HCT116 (cell line): ENCODE measurements at regions of chr11 and their contacts with region 1.

Region 1: GRCh38 chr11:33700425-33701271 is at the start of gene C11orf91:
- DNase-seq: peak; percentile 76
- ATAC-seq: peak; percentile 93
- H3K4me3 ChIP-seq: peak within 1 kb of the TSS; percentile 44 to 52
- H3K27ac ChIP-seq: peak within 1 kb of the TSS; percentile 23; the same call in 1 of the 2 replicates
- H3K4me1 ChIP-seq: peaks cover 10 to 71% of the 10 kb centered on the region in 2 experiments
- H3K27me3 ChIP-seq: no peaks in the 10 kb centered on the region
- CTCF ChIP-seq: no peak
- POLR2A ChIP-seq: no peak
- RAD21 ChIP-seq: no peak
- total RNA-seq, gene C11orf91: 0.54 TPM

Region 2: GRCh38 chr11:33716236-33716635 is 15.6 kb after region 1 on chr11:
- CTCF ChIA-PET with region 1: interaction called, 15 read pairs
- POLR2A ChIA-PET with region 1: interaction called, 3 read pairs
- RAD21 ChIA-PET with region 1: interaction called in 1 of 2 experiments, 3 read pairs
- intact Hi-C with region 1: no loop called
- DNase-seq: no peak
- ATAC-seq: peak; percentile 75
- H3K4me3 ChIP-seq: no peak overlapping the region
- H3K27ac ChIP-seq: no peak overlapping the region
- H3K4me1 ChIP-seq: no peaks in the 10 kb centered on the region
- H3K27me3 ChIP-seq: no peaks in the 10 kb centered on the region
- CTCF ChIP-seq: peak; percentile 37 to 51 (median 47); a peak in 4 of 6 replicates
- POLR2A ChIP-seq: no peak
- RAD21 ChIP-seq: peak; percentile 66

Region 3: GRCh38 chr11:33736148-33736809 is 35.6 kb after region 1 on chr11 and contains the start of gene CD59:
- CTCF ChIA-PET with region 1: no interaction called
- POLR2A ChIA-PET with region 1: interaction called, 12 read pairs
- RAD21 ChIA-PET with region 1: interaction called in 1 of 2 experiments, 4 read pairs
- intact Hi-C with region 1: loop called (anchors 5 kb)
- DNase-seq: peak; percentile 76
- ATAC-seq: peak; percentile 95
- H3K4me3 ChIP-seq: peak within 1 kb of the TSS; percentile 83 to 88
- H3K27ac ChIP-seq: peak within 1 kb of the TSS; percentile 71
- H3K4me1 ChIP-seq: peaks cover 13 to 28% of the 10 kb centered on the region in 2 experiments
- H3K27me3 ChIP-seq: no peaks in the 10 kb centered on the region
- CTCF ChIP-seq: no peak
- POLR2A ChIP-seq: peak; percentile 82
- RAD21 ChIP-seq: no peak
- total RNA-seq, gene CD59: 122 TPM

Region 4: DNA sequence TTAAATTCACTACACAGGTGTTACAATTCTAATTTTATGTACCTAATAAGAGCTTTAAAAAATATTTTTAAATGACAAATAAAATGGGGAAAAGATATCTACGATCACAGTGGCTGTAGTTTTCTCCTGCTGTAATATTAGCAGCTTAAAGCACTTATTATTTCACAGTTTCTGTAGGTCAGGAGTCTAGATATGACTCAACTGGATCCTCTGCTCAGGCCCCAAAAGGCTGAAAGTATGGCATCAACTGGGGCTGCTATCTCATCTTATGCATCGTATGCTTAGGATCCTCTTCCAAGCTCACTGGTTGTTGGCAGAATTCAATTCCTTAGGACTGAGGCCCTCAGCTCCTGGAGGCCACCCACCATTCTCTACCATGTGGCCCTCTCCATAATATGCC is 60.8 kb after region 1 on chr11:
- CTCF ChIA-PET with region 1: no interaction called
- POLR2A ChIA-PET with region 1: no interaction called
- RAD21 ChIA-PET with region 1: no interaction called
- intact Hi-C with region 1: no loop called
- DNase-seq: no peak
- ATAC-seq: no peak
- H3K4me3 ChIP-seq: no peak overlapping the region
- H3K27ac ChIP-seq: no peak overlapping the region
- H3K4me1 ChIP-seq: no peaks in the 10 kb centered on the region
- H3K27me3 ChIP-seq: no peaks in the 10 kb centered on the region
- CTCF ChIP-seq: no peak
- POLR2A ChIP-seq: no peak
- RAD21 ChIP-seq: no peak

Region 5: GRCh38 chr11:34977089-34977906 is 1276.7 kb after region 1 on chr11:
- CTCF ChIA-PET with region 1: no interaction called
- POLR2A ChIA-PET with region 1: no interaction called
- RAD21 ChIA-PET with region 1: no interaction called
- intact Hi-C with region 1: no loop called
- DNase-seq: peak; percentile 33
- ATAC-seq: peak; percentile 62
- H3K4me3 ChIP-seq: no peak overlapping the region; a peak in 1 of 4 replicates
- H3K27ac ChIP-seq: peak overlapping the region; percentile 52; the same call in 1 of the 2 replicates
- H3K4me1 ChIP-seq: peaks cover 18 to 46% of the 10 kb centered on the region in 2 experiments
- H3K27me3 ChIP-seq: no peaks in the 10 kb centered on the region
- CTCF ChIP-seq: no peak
- POLR2A ChIP-seq: no peak
- RAD21 ChIP-seq: no peak